Activated CD8-positive, alpha-beta T cell treated with anti-CD3 and anti-CD28 coated beads for 36 hours (primary cell): ENCODE measurements at regions of chr3 and their contacts with region 1.

Region 1: GRCh38 chr3:161310649-161311423 is 60.5 kb downstream of the SPTSSB start:
- DNase-seq: peak; percentile 89
- ATAC-seq: peak; percentile 83
- H3K4me3 Mint-ChIP-seq: peak overlapping the region; percentile 26
- H3K27ac Mint-ChIP-seq: peak overlapping the region; percentile 89
- H3K4me1 Mint-ChIP-seq: peaks cover 58% of the 10 kb centered on the region
- H3K27me3 Mint-ChIP-seq: peaks cover 32% of the 10 kb centered on the region
- CTCF ChIP-seq: no peak

Region 2: DNA sequence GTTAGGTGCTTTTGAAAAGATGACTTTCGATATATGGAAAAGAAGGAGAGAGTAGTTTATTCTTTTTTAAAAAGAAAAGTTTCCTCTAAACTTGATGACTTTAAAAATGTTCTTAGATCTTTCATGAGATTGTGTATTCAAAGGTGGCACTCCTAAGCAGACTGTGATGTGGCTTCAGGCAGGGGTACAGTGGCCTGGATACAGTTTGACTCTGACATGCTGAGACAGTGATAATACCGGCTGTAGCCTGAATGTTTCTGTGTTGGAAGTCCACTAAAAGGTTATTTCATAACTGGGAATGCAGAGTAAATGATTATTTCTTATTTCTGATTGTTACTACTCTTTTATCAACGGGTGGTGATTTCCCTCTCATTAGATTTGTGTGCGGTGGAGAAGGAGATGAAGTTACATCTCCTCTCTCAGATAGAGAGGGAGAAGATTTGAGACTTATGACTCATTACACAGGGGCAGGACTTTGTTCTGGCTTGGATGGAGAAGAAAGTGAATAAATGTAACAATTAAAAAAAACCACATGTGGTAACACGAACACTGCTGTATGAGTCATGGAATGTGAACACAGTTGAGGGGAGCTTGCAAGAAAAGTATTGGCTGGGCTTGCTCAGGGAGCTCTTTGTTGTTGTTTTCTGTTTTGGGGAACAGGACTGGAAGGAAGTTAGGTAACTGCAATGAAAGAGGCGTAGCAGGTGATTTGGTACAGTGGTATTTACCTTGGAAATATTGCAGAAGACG is 38.9 kb after region 1 on chr3:
- CTCF ChIA-PET with region 1: interaction called, 5 read pairs
- POLR2A ChIA-PET with region 1: interaction called, 4 read pairs
- intact Hi-C with region 1: loop called (anchors 2 kb)
- DNase-seq: peak; percentile 41
- ATAC-seq: peak; percentile 95
- H3K4me3 Mint-ChIP-seq: no peak overlapping the region
- H3K27ac Mint-ChIP-seq: peak overlapping the region; percentile 16
- H3K4me1 Mint-ChIP-seq: peaks cover 23% of the 10 kb centered on the region
- H3K27me3 Mint-ChIP-seq: peaks cover 15% of the 10 kb centered on the region
- CTCF ChIP-seq: no peak

Region 3: GRCh38 chr3:161393803-161394202 is 83.0 kb after region 1 on chr3:
- CTCF ChIA-PET with region 1: interaction called, 7 read pairs
- POLR2A ChIA-PET with region 1: no interaction called
- intact Hi-C with region 1: loop called (anchors 2 kb)
- DNase-seq: no peak
- ATAC-seq: peak; percentile 9
- H3K4me3 Mint-ChIP-seq: no peak overlapping the region
- H3K27ac Mint-ChIP-seq: no peak overlapping the region
- H3K4me1 Mint-ChIP-seq: peaks cover 34% of the 10 kb centered on the region
- H3K27me3 Mint-ChIP-seq: peaks cover 45% of the 10 kb centered on the region
- CTCF ChIP-seq: no peak